B cell (primary cell): ENCODE measurements at regions of chr16 and their contacts with region 1.

Region 1: DNA sequence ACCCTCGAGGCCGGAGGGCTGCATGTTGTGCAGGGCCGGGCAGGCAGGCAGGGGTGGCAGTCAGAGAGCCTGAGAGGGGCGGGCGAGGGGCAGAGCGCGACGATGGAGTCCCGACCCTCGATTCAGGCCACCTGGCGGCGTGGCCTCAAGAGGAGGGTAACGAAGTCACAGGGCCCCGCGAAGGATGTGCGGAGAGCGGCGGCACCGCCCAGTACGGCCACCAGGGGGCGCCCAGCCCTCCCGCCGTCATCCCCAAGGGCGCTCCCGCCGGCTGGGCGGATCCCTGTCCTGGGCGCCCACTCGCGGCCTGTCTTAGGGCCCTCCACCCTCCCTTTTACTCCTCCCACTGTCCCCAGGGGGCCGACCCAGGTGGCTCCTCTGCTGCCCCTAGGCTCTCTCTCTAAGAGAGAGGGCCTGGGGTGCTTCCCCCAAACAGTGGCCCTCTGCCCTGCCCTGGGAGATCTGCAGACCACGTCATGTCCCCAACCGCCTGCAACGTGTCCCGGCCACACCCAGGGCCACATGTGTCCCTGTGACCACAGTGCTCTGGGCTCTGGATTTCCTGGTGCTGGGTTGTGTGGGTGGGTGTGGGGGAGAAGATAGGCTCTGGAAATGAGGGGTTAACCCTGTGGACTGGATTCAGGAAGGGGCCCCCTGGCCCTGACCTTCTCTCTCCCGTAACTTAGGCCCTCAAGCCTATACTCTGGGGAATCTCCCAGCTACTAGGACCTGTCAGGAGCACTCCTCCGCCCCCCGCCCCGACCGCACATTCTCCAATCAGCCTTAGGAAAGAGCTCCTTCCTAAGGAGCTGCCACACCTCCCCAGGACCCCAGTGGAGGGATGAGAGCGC is 5.9 kb downstream of the DPEP2 start:
- DNase-seq: peak; percentile 92
- ATAC-seq: peak; percentile 87
- H3K4me3 ChIP-seq: peak overlapping the region; percentile 26 to 40 (median 31)
- H3K4me3 Mint-ChIP-seq: peak overlapping the region; percentile 82
- H3K27ac ChIP-seq: peak overlapping the region; percentile 86 to 89
- H3K27ac Mint-ChIP-seq: peak overlapping the region; percentile 99
- H3K4me1 ChIP-seq: peaks cover 49 to 60% of the 10 kb centered on the region in 2 donors
- H3K4me1 Mint-ChIP-seq: peaks cover 67% of the 10 kb centered on the region
- H3K27me3 ChIP-seq: no peaks in the 10 kb centered on the region
- H3K27me3 Mint-ChIP-seq: no peaks in the 10 kb centered on the region
- CTCF ChIP-seq: peak; percentile 96

Region 2: DNA sequence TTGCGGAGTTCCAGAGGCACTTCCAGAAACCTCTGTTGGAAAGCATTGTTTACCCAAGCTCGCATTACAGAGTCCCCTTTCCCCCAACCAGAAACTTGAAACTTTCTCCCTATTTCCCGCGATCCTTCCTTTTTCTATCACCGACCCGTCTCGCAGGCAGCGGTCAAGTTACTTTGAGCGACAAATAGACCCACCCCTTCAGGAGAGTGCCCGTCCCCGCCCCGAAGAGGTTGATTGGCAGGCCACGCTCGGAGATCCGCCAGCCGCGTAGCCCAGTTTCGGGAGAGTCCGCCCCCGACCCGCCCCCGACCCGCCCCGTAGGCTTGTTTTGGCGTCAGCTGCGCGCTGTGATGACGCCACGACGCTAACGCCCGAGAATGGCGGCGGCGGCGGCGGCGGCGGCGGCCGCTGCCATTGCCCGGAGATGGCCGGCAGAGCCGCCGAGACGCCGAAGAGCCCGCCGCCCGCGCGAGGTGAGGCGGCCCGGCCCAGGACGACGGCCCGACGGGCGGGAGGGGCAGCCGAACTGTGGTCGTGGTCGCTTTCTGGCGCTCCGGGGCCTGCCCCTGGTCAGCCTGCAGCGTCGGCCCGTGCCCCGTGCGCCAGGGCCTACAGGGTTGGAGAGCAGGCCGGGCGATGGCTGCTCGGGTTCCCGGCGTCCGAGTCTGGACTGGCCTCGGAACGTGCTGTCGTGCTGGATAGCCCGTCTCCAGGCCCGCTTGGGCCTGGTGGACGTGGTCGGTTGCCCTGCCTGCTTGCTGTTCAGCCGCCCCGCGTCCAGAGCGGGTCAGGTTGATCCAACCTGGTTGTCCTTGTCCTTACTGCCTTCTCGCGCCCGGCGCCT is 100.3 kb before region 1 on chr16 and contains the start of gene PSKH1:
- CTCF ChIA-PET with region 1: interaction called, 3 read pairs
- POLR2A ChIA-PET with region 1: interaction called, 6 read pairs
- intact Hi-C with region 1: loop called (anchors 5 kb)
- DNase-seq: peak; percentile 95
- ATAC-seq: peak; percentile 99
- H3K4me3 ChIP-seq: peak within 1 kb of the TSS; percentile 61 to 92 (median 76)
- H3K4me3 Mint-ChIP-seq: peak within 1 kb of the TSS; percentile 90
- H3K27ac ChIP-seq: peak within 1 kb of the TSS; percentile 77 to 95
- H3K27ac Mint-ChIP-seq: peak within 1 kb of the TSS; percentile 85
- H3K4me1 ChIP-seq: peaks cover 16 to 18% of the 10 kb centered on the region in 2 donors
- H3K4me1 Mint-ChIP-seq: peaks cover 31% of the 10 kb centered on the region
- H3K27me3 ChIP-seq: no peaks in the 10 kb centered on the region
- H3K27me3 Mint-ChIP-seq: no peaks in the 10 kb centered on the region
- CTCF ChIP-seq: no peak
- total RNA-seq, gene PSKH1: 29.1 TPM in 2 replicates

Region 3: GRCh38 chr16:67968400-67969253 is 24.8 kb before region 1 on chr16 and contains the start of gene SLC12A4:
- CTCF ChIA-PET with region 1: no interaction called
- POLR2A ChIA-PET with region 1: no interaction called
- intact Hi-C with region 1: loop called (anchors 1 kb)
- DNase-seq: peak; percentile 83
- ATAC-seq: peak; percentile 92
- H3K4me3 ChIP-seq: peak within 1 kb of the TSS; percentile 22 to 95 (median 80)
- H3K4me3 Mint-ChIP-seq: peak within 1 kb of the TSS; percentile 88
- H3K27ac ChIP-seq: peak within 1 kb of the TSS; percentile 10 to 63
- H3K27ac Mint-ChIP-seq: peak within 1 kb of the TSS; percentile 91
- H3K4me1 ChIP-seq: peaks cover 10 to 19% of the 10 kb centered on the region in 2 donors
- H3K4me1 Mint-ChIP-seq: peaks cover 20% of the 10 kb centered on the region
- H3K27me3 ChIP-seq: no peaks in the 10 kb centered on the region
- H3K27me3 Mint-ChIP-seq: no peaks in the 10 kb centered on the region
- CTCF ChIP-seq: no peak
- total RNA-seq, gene SLC12A4: 42.2 and 43.8 TPM in 2 replicates

Region 4: DNA sequence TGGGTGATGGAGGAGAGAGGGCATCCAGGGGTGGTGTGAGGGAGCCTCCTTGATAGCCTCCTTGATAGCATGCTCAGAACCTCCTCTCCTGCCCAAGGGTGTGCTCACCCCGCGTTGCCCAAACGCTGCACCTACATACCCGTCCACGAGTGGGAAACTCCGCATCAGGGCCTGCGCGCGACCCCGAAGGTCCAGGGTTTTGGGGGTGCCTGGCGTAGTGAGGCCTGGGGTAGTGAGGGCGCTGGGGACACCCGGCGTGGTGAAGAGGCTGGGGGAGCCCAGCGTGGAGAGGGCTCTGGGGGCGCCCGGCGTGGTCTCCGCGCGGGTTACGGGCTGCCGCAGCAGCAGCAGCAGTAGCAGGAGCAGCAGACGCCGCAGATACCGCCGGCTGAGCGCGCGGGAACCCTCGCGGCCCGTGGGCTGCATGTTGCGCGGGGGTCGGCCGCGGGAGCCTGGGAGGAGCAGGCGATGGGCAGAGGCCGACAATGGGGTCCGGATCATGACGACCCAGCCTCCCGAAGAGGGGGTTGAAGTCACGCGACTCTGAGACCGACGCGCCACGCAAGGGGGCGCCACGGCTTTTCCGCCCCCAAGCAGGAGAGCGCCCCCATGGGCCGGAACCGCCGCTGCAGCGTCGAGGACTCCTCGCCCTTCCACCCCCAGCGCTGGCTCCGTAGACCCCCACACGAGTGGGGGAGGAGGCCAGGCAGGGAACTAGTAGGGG is 13.3 kb before region 1 on chr16 and contains the start of gene DPEP3:
- CTCF ChIA-PET with region 1: interaction called, 6 read pairs
- POLR2A ChIA-PET with region 1: interaction called, 3 read pairs
- intact Hi-C with region 1: loop called (anchors 1 kb)
- DNase-seq: no peak
- ATAC-seq: no peak
- H3K4me3 ChIP-seq: no peak within 1 kb of the TSS
- H3K4me3 Mint-ChIP-seq: no peak within 1 kb of the TSS
- H3K27ac ChIP-seq: no peak within 1 kb of the TSS
- H3K27ac Mint-ChIP-seq: no peak within 1 kb of the TSS
- H3K4me1 ChIP-seq: peaks cover 19 to 30% of the 10 kb centered on the region in 2 donors
- H3K4me1 Mint-ChIP-seq: peaks cover 26% of the 10 kb centered on the region
- H3K27me3 ChIP-seq: peaks cover 0 to 3% (median 0%) of the 10 kb centered on the region in 4 experiments
- H3K27me3 Mint-ChIP-seq: no peaks in the 10 kb centered on the region
- CTCF ChIP-seq: no peak
- total RNA-seq, gene DPEP3: 2.0 and 2.6 TPM in 2 replicates

Region 5: GRCh38 chr16:68005786-68006286 is 12.4 kb after region 1 on chr16:
- CTCF ChIA-PET with region 1: interaction called, 22 read pairs
- POLR2A ChIA-PET with region 1: interaction called, 16 read pairs
- intact Hi-C with region 1: loop called (anchors 1 kb)
- DNase-seq: peak; percentile 76
- ATAC-seq: peak; percentile 99
- H3K4me3 ChIP-seq: peak overlapping the region in 1 of 5 experiments; percentile 46
- H3K4me3 Mint-ChIP-seq: peak overlapping the region; percentile 69
- H3K27ac ChIP-seq: peak overlapping the region; percentile 72 to 89
- H3K27ac Mint-ChIP-seq: peak overlapping the region; percentile 96
- H3K4me1 ChIP-seq: peaks cover 29 to 39% of the 10 kb centered on the region in 2 donors
- H3K4me1 Mint-ChIP-seq: peaks cover 35% of the 10 kb centered on the region
- H3K27me3 ChIP-seq: no peaks in the 10 kb centered on the region
- H3K27me3 Mint-ChIP-seq: no peaks in the 10 kb centered on the region
- CTCF ChIP-seq: no peak

Region 6: GRCh38 chr16:68022704-68023522 is 29.5 kb after region 1 on chr16 and contains the starts of genes DDX28 and DUS2:
- CTCF ChIA-PET with region 1: interaction called, 19 read pairs
- POLR2A ChIA-PET with region 1: interaction called, 27 read pairs
- intact Hi-C with region 1: loop called (anchors 1 kb)
- DNase-seq: peak; percentile 96
- ATAC-seq: peak; percentile 94
- H3K4me3 ChIP-seq: peak within 1 kb of the TSS; percentile 74 to 98 (median 90)
- H3K4me3 Mint-ChIP-seq: peak within 1 kb of the TSS; percentile 96
- H3K27ac ChIP-seq: peak within 1 kb of the TSS; percentile 72 to 79
- H3K27ac Mint-ChIP-seq: peak within 1 kb of the TSS; percentile 99
- H3K4me1 ChIP-seq: peaks cover 23 to 26% of the 10 kb centered on the region in 2 donors
- H3K4me1 Mint-ChIP-seq: peaks cover 27% of the 10 kb centered on the region
- H3K27me3 ChIP-seq: no peaks in the 10 kb centered on the region
- H3K27me3 Mint-ChIP-seq: no peaks in the 10 kb centered on the region
- CTCF ChIP-seq: no peak
- total RNA-seq, gene DDX28: 19.2 and 20.2 TPM in 2 replicates
- total RNA-seq, gene DUS2: 61.1 and 69.1 TPM in 2 replicates

Region 7: DNA sequence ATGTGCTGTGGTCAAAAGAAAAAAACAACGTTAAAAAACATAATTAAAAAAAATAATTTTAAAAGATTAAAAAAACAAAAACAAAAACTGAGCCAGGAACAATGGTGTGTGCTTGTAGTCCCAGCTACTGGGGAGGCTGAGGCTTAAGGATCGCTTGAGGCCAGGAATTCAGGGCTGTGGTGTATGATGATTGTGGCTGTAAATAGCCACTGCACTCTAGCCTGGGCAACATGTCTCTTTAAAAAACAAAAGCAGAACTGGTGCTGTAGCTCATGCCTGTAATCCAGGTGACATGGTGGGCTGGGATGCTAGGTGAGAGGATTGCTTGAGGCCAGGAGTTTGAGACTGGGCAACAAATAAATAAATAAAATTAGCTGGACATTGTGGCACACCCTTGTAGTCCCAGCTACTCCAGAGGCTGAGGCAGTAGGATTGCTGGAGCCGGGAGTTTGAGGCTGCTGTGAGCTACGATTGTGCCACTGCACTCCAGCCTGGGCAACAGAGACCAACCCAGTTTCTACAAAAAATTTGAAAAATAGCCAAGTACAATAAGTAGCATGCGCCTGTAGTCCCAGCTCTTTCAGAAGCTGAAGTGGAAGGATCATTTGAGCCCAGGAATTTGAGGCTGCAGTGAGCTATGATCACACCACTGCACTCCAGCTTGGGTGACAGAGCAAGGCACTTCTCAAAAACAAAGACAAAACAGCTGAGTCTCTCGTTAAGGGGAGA is 135.3 kb after region 1 on chr16:
- CTCF ChIA-PET with region 1: no interaction called
- POLR2A ChIA-PET with region 1: no interaction called
- intact Hi-C with region 1: no loop called
- DNase-seq: no peak
- ATAC-seq: no peak
- H3K4me3 ChIP-seq: no peak overlapping the region
- H3K4me3 Mint-ChIP-seq: no peak overlapping the region
- H3K27ac ChIP-seq: peak overlapping the region in 1 of 2 donors; percentile 37
- H3K27ac Mint-ChIP-seq: peak overlapping the region; percentile 72
- H3K4me1 ChIP-seq: peaks cover 17 to 35% of the 10 kb centered on the region in 2 donors
- H3K4me1 Mint-ChIP-seq: peaks cover 61% of the 10 kb centered on the region
- H3K27me3 ChIP-seq: no peaks in the 10 kb centered on the region
- H3K27me3 Mint-ChIP-seq: no peaks in the 10 kb centered on the region
- CTCF ChIP-seq: no peak

Region 8: DNA sequence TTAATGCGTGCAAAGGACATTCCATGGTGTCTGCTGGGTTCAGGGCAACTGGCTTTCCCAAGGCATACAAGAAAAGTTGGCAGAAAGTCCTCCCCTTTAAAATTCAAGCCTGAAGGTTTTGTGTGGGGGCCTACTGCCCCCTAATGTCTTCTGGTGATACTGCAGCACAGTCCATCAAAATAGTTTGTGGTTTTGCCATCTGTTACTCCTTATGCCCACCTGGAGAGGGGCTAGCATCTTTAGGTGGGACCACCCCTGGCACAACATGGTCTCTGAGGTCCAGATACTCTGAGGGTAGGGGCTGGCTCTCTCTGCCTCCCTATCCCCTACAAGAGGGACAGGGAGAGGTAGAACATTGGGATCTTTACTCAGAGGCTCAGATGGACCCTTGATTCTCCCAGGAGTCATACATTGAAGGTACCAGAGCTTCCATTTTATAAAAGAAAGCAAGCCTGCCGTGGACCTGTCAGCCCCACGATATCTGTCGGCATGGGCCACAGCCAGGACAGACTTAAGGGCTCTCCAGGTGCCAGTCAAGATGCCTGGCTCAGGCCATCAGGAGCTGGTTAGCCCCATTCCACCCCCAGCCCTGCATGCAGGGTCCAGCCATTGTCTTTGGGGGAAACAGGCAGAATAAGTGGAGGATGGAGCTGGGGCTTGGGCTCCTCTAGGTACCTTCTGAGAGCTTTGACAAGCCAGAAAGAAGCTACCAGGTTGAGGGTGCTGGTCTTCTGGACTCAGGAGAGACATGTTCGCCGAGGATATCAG is 236.2 kb after region 1 on chr16:
- CTCF ChIA-PET with region 1: no interaction called
- POLR2A ChIA-PET with region 1: no interaction called
- intact Hi-C with region 1: loop called (anchors 2 kb)
- DNase-seq: peak; percentile 70
- ATAC-seq: peak; percentile 53
- H3K4me3 ChIP-seq: no peak overlapping the region
- H3K4me3 Mint-ChIP-seq: no peak overlapping the region
- H3K27ac ChIP-seq: no peak overlapping the region
- H3K27ac Mint-ChIP-seq: peak overlapping the region; percentile 82
- H3K4me1 ChIP-seq: peaks cover 27 to 28% of the 10 kb centered on the region in 2 donors
- H3K4me1 Mint-ChIP-seq: peaks cover 46% of the 10 kb centered on the region
- H3K27me3 ChIP-seq: no peaks in the 10 kb centered on the region
- H3K27me3 Mint-ChIP-seq: no peaks in the 10 kb centered on the region
- CTCF ChIP-seq: peak; percentile 96